Panc1 (cell line): ENCODE measurements at regions of chr10 and their contacts with region 1.

Region 1: GRCh38 chr10:112124866-112125265 is 58.7 kb downstream of the GPAM start:
- DNase-seq: no peak
- ATAC-seq: no peak
- H3K4me3 ChIP-seq: no peak overlapping the region
- H3K27ac ChIP-seq: no peak overlapping the region
- H3K4me1 ChIP-seq: no peaks in the 10 kb centered on the region
- H3K27me3 ChIP-seq: peaks cover 17% of the 10 kb centered on the region
- CTCF ChIP-seq: no peak

Region 2: GRCh38 chr10:111057006-111057405 is 1067.9 kb before region 1 on chr10:
- CTCF ChIA-PET with region 1: no interaction called
- POLR2A ChIA-PET with region 1: no interaction called
- in situ Hi-C with region 1: no loop called
- intact Hi-C with region 1: no loop called
- DNase-seq: no peak
- ATAC-seq: no peak
- H3K4me3 ChIP-seq: no peak overlapping the region
- H3K27ac ChIP-seq: no peak overlapping the region
- H3K4me1 ChIP-seq: no peaks in the 10 kb centered on the region
- H3K27me3 ChIP-seq: no peaks in the 10 kb centered on the region
- CTCF ChIP-seq: no peak

Region 3: DNA sequence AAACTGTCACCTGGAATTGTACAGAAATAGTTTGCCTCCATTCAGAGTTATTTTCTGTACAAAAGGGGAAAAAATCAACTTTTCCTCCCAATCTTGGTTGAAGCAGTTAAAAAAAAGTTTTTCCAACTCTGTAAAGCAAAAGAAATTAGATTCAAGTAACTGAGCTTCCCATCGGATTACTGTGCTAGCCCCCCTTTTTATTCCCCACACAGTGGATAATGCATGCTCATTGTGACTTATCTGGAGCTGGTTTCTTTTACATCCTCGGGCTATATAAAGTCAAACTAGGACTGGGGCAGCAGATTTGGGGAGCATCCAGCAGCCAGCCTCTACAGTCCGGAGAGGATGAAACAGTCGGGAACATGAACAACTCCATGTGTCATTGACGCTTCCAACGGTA is 158.2 kb after region 1 on chr10 and contains the start of gene TECTB:
- CTCF ChIA-PET with region 1: interaction called, 16 read pairs
- POLR2A ChIA-PET with region 1: no interaction called
- in situ Hi-C with region 1: no loop called
- intact Hi-C with region 1: no loop called
- DNase-seq: no peak
- ATAC-seq: no peak
- H3K4me3 ChIP-seq: no peak within 1 kb of the TSS
- H3K27ac ChIP-seq: no peak within 1 kb of the TSS
- H3K4me1 ChIP-seq: no peaks in the 10 kb centered on the region
- H3K27me3 ChIP-seq: peaks cover 14% of the 10 kb centered on the region
- CTCF ChIP-seq: no peak
- total RNA-seq, gene TECTB: not detected